CD8-positive, alpha-beta T cell (primary cell): ENCODE measurements at regions of chr1 and their contacts with region 1.

Region 1: DNA sequence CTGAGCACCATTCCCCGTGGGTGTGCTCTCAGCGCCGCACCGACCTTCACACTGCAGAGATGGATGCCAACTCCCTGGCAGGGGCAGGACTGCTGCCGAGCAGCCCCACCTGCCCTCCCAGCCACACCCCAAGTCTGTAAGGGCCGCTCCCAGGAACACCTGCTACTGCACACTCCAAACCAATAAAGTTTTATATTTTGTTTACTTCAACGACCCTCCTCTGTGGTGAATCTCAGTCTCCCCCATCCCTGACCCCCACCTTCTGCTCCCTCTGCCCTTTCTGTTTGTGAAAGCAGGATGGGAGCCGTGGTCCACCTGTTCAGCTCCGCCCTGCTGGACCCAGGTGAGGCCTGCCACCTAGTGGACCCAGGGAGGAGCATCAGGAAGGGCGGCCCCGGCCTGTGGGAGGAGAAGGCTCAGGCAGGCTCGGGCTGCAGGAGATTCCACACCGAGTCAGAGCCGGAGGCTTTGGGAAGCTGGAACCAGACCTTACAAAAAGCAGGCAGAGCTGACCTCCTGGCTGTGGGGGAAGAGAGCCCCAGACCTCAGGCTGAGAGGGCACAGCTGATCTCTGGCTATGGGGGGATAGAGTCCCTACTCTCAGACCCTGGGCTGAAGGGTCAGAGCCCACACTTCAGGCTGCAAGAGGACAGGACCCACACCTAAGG is 982 bp upstream of the TMEM82 start:
- DNase-seq: peak; percentile 24 to 80 (median 63)
- ATAC-seq: peak; percentile 90
- H3K4me3 ChIP-seq: no peak overlapping the region
- H3K4me3 Mint-ChIP-seq: no peak overlapping the region
- H3K27ac ChIP-seq: no peak overlapping the region
- H3K27ac Mint-ChIP-seq: no peak overlapping the region
- H3K4me1 ChIP-seq: peaks cover 5% of the 10 kb centered on the region
- H3K4me1 Mint-ChIP-seq: peaks cover 3% of the 10 kb centered on the region
- H3K27me3 ChIP-seq: no peaks in the 10 kb centered on the region
- H3K27me3 Mint-ChIP-seq: no peaks in the 10 kb centered on the region
- CTCF ChIP-seq: peak; percentile 69

Region 2: GRCh38 chr1:15595809-15596617 is 145.3 kb before region 1 on chr1:
- CTCF ChIA-PET with region 1: interaction called, 10 read pairs
- POLR2A ChIA-PET with region 1: no interaction called
- intact Hi-C with region 1: loop called in 1 of 2 experiments (anchors 1 kb)
- DNase-seq: no peak
- ATAC-seq: no peak
- H3K4me3 ChIP-seq: no peak overlapping the region
- H3K4me3 Mint-ChIP-seq: no peak overlapping the region
- H3K27ac ChIP-seq: no peak overlapping the region
- H3K27ac Mint-ChIP-seq: no peak overlapping the region
- H3K4me1 ChIP-seq: no peaks in the 10 kb centered on the region
- H3K4me1 Mint-ChIP-seq: no peaks in the 10 kb centered on the region
- H3K27me3 ChIP-seq: no peaks in the 10 kb centered on the region
- H3K27me3 Mint-ChIP-seq: no peaks in the 10 kb centered on the region
- CTCF ChIP-seq: no peak

Region 3: DNA sequence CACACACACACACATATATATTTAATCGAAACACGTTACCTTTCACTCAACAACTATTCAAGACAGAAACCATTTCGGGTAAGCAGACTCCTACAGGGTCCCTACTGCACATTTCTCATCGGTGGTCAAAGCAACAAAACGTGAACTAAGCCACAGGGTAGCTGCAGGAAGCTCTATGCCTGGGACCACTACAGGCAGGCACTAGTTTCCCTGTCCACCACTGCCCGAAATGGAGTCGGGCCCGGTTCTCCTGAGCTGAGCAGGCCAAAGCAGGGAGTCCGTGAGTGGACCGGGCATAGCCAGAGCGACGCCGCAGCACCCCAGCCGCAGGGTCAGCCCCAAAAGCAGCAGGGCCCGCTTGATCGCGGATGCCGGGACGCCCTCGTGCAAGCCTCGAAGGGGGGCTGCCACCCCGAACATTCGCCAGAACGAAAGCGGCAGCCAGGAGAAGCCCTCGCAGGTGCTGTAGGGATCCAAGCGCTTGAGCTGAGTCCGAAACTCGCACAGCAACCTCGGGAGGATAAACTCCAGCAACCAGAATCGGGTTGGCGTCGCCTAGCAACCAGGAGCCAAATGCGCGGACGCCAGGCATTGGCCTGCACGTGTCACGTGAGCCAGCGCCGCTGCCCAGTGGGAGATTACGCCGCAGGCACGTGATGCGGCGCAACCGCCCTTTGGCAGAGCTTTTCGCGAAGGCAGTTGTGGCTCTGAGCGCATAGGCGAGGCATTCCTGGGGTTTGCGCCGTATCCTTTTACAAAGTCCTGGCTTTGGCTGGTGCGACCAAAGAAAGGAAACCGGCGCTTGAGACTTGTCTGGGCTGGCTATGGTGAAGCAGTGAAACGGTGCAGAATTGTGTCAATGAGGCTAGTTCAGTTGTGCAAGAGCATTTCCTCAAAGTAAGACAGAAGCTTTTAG is 138.0 kb before region 1 on chr1:
- CTCF ChIA-PET with region 1: interaction called, 10 read pairs
- POLR2A ChIA-PET with region 1: no interaction called
- intact Hi-C with region 1: no loop called
- DNase-seq: peak; percentile 82 to 97 (median 92)
- ATAC-seq: peak; percentile 94
- H3K4me3 ChIP-seq: peak overlapping the region; percentile 77 to 79
- H3K4me3 Mint-ChIP-seq: peak overlapping the region; percentile 69
- H3K27ac ChIP-seq: peak overlapping the region; percentile 57 to 77
- H3K27ac Mint-ChIP-seq: peak overlapping the region; percentile 75
- H3K4me1 ChIP-seq: peaks cover 5% of the 10 kb centered on the region
- H3K4me1 Mint-ChIP-seq: peaks cover 12% of the 10 kb centered on the region
- H3K27me3 ChIP-seq: no peaks in the 10 kb centered on the region
- H3K27me3 Mint-ChIP-seq: no peaks in the 10 kb centered on the region
- CTCF ChIP-seq: no peak

Region 4: DNA sequence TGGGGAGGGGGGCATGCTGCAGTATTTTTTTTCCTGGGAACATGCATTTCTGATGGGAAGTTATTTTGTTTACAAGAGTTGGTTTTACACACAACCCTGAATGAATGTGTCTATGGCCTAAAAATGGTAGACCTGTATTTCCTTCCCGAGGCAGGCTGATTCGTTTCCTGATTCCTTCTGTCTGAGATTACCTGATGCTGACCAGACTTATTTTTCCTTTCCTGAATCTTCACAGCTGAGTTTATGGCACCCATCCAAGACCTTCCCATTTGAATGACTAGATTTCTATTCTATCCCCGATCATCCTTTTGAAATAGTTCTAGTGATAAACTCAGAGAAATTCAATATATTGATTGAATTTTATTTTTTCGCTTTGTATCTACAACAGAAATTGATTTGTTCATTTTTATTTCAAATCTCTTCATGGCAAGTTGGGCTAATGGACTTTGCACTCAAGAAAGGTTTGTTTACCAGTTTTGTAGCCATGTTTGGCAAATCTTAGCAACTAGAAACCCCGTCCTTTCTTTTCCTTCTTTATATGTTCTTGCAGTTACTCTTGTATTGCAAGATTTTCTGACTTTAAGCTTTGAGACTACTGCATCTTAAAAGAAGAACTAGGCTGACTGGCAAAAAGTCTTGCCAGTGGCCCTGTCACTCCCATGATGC is 73.1 kb before region 1 on chr1:
- CTCF ChIA-PET with region 1: no interaction called
- POLR2A ChIA-PET with region 1: interaction called, 5 read pairs
- intact Hi-C with region 1: loop called in 1 of 2 experiments (anchors 10 kb)
- DNase-seq: no peak
- ATAC-seq: no peak
- H3K4me3 ChIP-seq: no peak overlapping the region
- H3K4me3 Mint-ChIP-seq: no peak overlapping the region
- H3K27ac ChIP-seq: no peak overlapping the region
- H3K27ac Mint-ChIP-seq: no peak overlapping the region
- H3K4me1 ChIP-seq: no peaks in the 10 kb centered on the region
- H3K4me1 Mint-ChIP-seq: no peaks in the 10 kb centered on the region
- H3K27me3 ChIP-seq: no peaks in the 10 kb centered on the region
- H3K27me3 Mint-ChIP-seq: no peaks in the 10 kb centered on the region
- CTCF ChIP-seq: no peak